Aorta (tissue), 5 donors: ENCODE measurements at regions of chr1 and their contacts with region 1.

Region 1: GRCh38 chr1:23184212-23184934 is 15.7 kb upstream of the LUZP1 start:
- DNase-seq: no peak
- ATAC-seq: peak; percentile 71
- H3K4me3 ChIP-seq: no peak overlapping the region
- H3K27ac ChIP-seq: no peak overlapping the region
- H3K4me1 ChIP-seq: no peaks in the 10 kb centered on the region
- H3K27me3 ChIP-seq: no peaks in the 10 kb centered on the region

Region 2: DNA sequence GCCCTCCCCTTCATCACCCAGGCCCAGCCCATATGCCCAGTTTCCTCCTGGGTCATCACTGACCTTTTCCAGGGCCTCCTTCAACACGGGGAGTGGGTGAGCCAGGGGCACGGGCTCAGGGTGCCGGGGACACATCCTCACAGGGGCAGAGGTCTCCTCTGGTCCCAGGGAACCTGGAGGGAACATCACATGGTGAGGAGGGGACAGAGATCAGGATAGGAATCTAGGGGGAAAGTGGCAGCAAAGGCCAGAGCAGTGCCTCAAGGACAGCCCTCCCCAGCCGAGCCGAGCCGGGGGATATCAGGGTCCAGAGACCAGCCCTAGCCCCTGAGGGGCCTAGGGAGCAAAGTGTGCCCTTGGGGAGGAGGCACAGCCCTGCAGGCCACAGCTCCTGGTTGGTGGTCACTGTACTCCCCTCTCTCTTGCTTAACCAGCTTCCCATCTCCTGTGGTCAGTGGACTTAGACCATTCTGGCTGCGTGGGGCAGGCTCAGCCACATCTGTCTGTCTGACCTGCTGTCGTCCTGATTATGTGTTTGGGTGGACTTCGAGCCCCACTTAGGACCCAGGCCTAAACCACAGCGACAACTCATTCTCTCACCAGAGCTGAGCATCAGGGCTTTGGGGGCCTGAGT is 221.2 kb before region 1 on chr1:
- intact Hi-C with region 1: loop called in 1 of 2 experiments (anchors 5 kb)
- DNase-seq: peak in 1 of 2 donors; percentile 51
- ATAC-seq: no peak
- H3K4me3 ChIP-seq: no peak overlapping the region
- H3K27ac ChIP-seq: no peak overlapping the region
- H3K4me1 ChIP-seq: no peaks in the 10 kb centered on the region
- H3K27me3 ChIP-seq: no peaks in the 10 kb centered on the region

Region 3: GRCh38 chr1:22976461-22977243 is 207.7 kb before region 1 on chr1:
- intact Hi-C with region 1: loop called in 1 of 2 experiments (anchors 10 kb)
- DNase-seq: peak in 1 of 2 donors; percentile 75
- ATAC-seq: peak; percentile 84
- H3K4me3 ChIP-seq: no peak overlapping the region
- H3K27ac ChIP-seq: no peak overlapping the region
- H3K4me1 ChIP-seq: no peaks in the 10 kb centered on the region
- H3K27me3 ChIP-seq: peaks cover 0 to 2% of the 10 kb centered on the region in 2 donors

Region 4: DNA sequence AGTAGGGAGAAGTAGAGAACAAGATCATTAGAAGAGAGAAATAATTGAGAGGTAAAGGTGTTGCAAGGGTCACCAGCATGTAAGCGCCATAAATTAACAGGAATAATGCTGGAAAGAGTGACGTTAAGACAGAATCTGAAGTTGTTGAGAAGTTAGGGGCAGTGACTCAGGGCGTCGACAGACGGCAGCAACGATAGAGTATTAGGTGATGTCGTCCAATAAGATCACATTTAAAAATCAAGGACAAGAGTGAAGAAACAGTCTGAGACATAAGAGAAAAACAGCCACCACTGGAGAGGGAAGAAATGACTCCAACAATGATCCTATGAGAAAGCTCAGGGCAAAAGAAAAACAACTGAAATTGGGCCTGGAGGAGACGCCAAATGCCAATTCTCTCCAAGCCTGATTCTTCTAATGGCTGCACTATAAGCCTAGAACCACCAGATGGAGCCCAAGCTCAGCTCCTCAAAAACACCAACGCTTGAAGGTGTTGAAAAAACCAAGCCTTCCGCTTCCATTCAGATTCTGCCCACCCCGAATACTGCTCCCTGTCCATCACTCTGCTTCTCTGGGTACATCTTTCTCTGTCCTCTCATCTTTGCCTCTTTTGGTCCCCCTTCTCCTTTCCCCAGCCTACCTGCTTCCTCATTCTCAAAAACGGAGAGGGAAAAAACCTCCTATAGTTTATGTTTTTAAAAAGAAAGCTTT is 85.8 kb before region 1 on chr1:
- intact Hi-C with region 1: loop called (anchors 1 to 2 kb)
- DNase-seq: no peak
- ATAC-seq: peak; percentile 87
- H3K4me3 ChIP-seq: no peak overlapping the region
- H3K27ac ChIP-seq: no peak overlapping the region
- H3K4me1 ChIP-seq: peaks cover 3 to 10% of the 10 kb centered on the region in 2 donors
- H3K27me3 ChIP-seq: no peaks in the 10 kb centered on the region

Region 5: DNA sequence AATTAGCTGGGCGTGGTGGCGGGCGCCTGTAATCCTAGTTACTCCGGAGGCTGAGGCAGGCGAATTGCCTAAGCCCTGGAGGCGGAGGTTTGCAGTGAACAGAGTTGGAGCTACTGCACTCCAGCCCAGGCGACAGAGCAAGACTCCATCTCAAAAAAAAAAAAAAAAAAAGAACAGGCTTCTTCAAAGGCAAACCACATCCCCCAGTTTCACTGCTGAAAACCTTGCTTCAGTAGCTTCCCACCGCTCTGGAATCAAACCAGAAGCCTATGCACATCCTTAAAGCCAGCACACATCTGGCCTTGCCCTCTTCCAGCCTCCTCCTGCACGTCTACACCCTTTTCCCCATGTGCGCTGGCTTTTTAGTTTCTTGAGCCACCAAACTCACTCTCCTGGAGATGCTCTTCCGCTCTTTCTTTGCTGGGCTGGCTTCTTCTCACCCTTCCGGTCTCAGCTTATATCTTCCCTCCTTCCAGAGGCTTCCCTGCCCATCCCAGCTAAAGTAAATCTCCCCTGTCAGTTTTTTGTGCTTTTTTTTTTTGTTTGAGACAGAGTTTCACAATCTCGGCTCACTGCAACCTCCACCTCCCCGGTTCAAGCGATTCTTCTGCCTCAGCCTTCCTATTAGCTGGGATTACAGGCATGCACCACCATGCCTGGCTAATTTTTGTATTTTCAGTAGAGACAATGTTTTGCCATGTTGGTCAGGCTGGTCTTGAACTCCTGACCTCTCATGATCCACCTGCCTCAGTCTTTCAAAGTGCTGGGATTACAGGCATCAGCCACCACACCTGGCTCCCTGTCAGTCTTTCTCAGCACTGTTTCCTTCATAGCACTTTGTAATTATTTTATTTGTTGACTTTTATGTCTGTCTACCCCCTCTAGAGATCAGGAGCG is 416.9 kb after region 1 on chr1:
- intact Hi-C with region 1: no loop called
- DNase-seq: no peak
- ATAC-seq: no peak
- H3K4me3 ChIP-seq: no peak overlapping the region
- H3K27ac ChIP-seq: no peak overlapping the region
- H3K4me1 ChIP-seq: no peaks in the 10 kb centered on the region
- H3K27me3 ChIP-seq: no peaks in the 10 kb centered on the region

Region 6: DNA sequence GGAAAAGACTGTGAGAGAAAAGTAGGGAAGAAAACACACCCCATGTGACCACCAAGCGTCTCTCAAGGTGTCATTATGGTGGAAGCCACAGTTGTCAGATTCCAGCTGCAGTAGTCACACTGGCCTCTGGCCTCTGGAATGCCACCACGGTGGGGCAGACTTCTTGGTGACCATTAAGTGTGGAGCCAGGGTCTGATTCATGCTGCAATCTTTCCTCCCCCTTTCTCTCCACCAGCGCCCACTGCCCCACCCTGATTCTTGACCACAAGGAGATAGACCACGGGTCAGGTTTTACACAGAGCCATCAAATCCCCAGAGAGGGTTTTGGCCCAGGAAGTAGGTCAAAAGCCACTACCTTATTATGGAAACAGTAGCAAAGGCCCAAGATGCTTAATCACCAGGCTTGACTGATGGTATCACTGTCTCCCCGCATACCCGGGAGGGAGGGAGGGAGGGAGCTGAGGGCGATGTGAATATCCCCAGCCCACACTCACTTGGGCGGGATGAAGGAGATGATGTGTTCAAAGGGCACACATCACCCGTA is 1082.1 kb after region 1 on chr1:
- intact Hi-C with region 1: no loop called
- DNase-seq: no peak
- ATAC-seq: no peak
- H3K4me3 ChIP-seq: no peak overlapping the region
- H3K27ac ChIP-seq: no peak overlapping the region
- H3K4me1 ChIP-seq: no peaks in the 10 kb centered on the region
- H3K27me3 ChIP-seq: no peaks in the 10 kb centered on the region